ENCODE measurements at regions of chr3 and their contacts with region 1.

Region 1: GRCh38 chr3:57910988-57911387 is 97.2 kb upstream of the FLNB start:
- DNase-seq: no peak
- ATAC-seq: peak in 2 of 4 donors; percentile 23 to 43
- H3K4me3 ChIP-seq: no peak overlapping the region
- H3K27ac ChIP-seq: peak overlapping the region in 1 of 12 donors; percentile 65
- H3K4me1 ChIP-seq: peaks cover 0 to 4% (median 0%) of the 10 kb centered on the region in 12 donors
- H3K27me3 ChIP-seq: no peaks in the 10 kb centered on the region
- CTCF ChIP-seq: peak in 7 of 12 donors; percentile 6 to 45 (median 31)
- POLR2A ChIP-seq: no peak

Region 2: GRCh38 chr3:57646723-57647122 is 264.3 kb before region 1 on chr3:
- intact Hi-C with region 1: loop called in 1 of 10 experiments (anchors 10 kb)
- DNase-seq: peak in 2 of 5 donors; percentile 22 to 35
- ATAC-seq: peak; percentile 86 to 92 (median 89)
- H3K4me3 ChIP-seq: no peak overlapping the region
- H3K27ac ChIP-seq: peak overlapping the region in 2 of 12 donors; percentile 25 to 34
- H3K4me1 ChIP-seq: peaks cover 0 to 12% (median 6%) of the 10 kb centered on the region in 12 donors
- H3K27me3 ChIP-seq: no peaks in the 10 kb centered on the region
- CTCF ChIP-seq: peak in 8 of 12 donors; percentile 24 to 60 (median 41)
- POLR2A ChIP-seq: no peak

Region 3: DNA sequence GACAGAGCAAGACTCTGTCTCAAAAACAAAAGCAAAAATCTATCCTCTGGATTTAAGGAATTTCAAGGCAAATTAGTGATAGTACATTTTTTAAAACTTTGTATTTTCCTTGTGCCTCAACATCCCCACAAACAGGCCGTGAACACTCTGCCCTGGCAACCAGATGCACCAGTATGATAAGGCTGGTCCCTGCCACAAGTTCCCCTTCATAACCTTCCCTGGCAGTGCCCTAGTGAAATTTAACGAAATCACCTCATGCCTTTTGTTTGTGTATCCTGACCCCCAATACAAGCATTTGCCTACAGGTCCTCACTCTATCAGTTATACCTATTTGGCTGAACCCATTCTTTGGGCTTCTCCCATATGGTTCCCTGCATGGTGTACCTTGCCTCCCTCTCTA is 10.2 kb before region 1 on chr3:
- intact Hi-C with region 1: loop called in 1 of 10 experiments (anchors 2 kb)
- DNase-seq: no peak
- ATAC-seq: no peak
- H3K4me3 ChIP-seq: no peak overlapping the region
- H3K27ac ChIP-seq: peak overlapping the region in 1 of 12 donors; percentile 68
- H3K4me1 ChIP-seq: peaks cover 0 to 35% (median 7%) of the 10 kb centered on the region in 12 donors
- H3K27me3 ChIP-seq: no peaks in the 10 kb centered on the region
- CTCF ChIP-seq: no peak
- POLR2A ChIP-seq: no peak

Measured in heart left ventricle (tissue), 16 donors.